ENCODE measurements at regions of chr6 and their contacts with region 1.

Region 1: DNA sequence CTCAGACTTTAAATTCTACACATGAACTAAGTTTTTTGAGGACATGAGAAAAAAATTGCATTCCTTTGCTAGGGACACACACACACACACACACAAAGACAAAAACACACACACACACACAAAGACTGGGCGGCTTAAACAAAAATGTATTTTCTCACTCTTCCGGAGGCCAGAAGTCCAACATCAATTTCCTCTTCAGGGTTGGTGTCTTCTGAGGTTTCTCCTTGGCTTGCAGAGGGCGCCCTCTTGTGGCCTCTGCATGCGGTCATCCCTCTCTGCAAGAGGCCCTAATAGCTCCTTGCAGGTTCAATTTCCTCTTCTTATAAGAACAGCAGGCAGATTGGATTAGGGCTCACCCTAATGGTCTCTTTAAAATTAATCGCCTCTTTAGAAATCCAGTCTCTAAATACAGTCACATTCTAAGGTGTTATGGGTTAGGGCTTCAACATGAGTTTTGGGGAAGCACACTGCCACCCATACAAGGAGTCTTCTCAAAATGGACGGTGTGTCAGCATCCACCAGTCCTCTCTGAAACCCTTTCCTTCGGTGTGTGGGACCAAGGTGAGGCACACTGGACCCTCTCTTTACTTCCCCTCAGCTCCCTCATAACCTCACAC is 61.4 kb downstream of the GPR6 start:
- DNase-seq: peak; percentile 82

Region 2: GRCh38 chr6:109705258-109705657 is 334.2 kb before region 1 on chr6:
- CTCF ChIA-PET with region 1: interaction called, 26 read pairs
- POLR2A ChIA-PET with region 1: no interaction called
- DNase-seq: peak; percentile 73

Region 3: DNA sequence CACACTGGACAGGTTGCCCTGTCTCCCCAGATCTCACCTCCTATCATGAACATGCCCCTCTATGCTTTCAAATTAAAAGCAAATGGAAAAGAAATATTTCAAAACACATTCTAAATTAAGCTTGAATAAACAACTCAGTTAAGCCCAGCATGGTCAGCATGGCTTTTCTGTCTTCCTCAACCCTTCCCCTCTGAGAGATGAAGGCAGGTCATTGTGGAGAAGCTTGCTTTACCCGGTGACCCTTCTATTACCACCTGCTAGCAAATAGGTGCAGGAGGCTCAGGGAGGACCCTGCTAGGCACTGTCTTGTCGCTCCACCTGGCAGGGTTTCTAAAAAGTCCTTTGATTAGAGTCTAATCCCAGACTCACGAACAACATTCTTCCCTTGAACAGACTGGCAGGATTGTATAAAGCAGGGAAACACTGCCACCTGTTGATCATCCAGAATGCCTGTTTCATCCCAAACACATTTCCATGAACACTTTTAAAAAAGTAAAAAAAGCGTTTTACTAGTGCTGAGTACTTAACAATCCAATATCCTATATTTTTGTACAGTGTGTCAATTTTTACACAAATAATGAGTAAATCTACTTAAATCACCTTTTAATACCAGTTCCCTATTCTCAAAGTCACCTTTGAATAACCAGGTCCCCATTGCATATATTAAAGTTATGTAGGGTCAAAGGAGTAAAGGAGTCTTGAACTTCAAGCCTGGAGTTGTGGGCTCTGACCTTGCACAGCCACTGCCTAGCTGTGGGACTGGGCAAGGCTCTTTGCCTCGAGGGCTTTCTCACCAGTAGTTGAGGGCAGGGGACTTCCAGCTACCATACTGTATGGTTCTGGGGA is 14.1 kb after region 1 on chr6:
- CTCF ChIA-PET with region 1: interaction called, 11 read pairs
- POLR2A ChIA-PET with region 1: no interaction called
- DNase-seq: peak; percentile 70

Region 4: GRCh38 chr6:110392727-110393126 is 353.3 kb after region 1 on chr6:
- CTCF ChIA-PET with region 1: interaction called, 13 read pairs
- POLR2A ChIA-PET with region 1: no interaction called
- DNase-seq: peak; percentile 33

Measured in HEK293T (cell line).